A673 (cell line): ENCODE measurements at regions of chr15 and their contacts with region 1.

Region 1: DNA sequence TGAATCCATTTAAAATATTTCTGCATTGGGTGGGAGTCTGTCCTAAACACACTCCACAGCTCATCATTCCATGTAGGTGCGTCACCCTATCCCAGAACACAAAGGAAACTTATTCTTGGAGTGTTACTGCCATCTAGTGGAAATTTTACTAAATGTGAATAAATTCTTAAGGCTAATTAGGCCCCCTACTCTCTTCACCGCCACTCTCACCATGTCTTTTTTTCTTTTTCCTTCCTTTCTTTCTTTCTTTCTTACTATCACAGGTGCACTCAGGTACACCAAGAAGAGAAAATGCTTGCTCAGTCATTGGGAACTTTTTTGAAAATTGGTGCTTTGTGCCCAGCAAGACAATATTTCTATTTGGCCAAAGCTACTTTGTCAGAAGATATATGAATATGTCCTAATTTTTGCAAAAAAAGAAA is 26.4 kb upstream of the ATP8B4 start:
- DNase-seq: peak; percentile 86
- H3K4me3 ChIP-seq: no peak overlapping the region
- H3K27ac ChIP-seq: no peak overlapping the region
- H3K4me1 ChIP-seq: peaks cover 6% of the 10 kb centered on the region
- H3K27me3 ChIP-seq: no peaks in the 10 kb centered on the region
- CTCF ChIP-seq: peak; percentile 60

Region 2: DNA sequence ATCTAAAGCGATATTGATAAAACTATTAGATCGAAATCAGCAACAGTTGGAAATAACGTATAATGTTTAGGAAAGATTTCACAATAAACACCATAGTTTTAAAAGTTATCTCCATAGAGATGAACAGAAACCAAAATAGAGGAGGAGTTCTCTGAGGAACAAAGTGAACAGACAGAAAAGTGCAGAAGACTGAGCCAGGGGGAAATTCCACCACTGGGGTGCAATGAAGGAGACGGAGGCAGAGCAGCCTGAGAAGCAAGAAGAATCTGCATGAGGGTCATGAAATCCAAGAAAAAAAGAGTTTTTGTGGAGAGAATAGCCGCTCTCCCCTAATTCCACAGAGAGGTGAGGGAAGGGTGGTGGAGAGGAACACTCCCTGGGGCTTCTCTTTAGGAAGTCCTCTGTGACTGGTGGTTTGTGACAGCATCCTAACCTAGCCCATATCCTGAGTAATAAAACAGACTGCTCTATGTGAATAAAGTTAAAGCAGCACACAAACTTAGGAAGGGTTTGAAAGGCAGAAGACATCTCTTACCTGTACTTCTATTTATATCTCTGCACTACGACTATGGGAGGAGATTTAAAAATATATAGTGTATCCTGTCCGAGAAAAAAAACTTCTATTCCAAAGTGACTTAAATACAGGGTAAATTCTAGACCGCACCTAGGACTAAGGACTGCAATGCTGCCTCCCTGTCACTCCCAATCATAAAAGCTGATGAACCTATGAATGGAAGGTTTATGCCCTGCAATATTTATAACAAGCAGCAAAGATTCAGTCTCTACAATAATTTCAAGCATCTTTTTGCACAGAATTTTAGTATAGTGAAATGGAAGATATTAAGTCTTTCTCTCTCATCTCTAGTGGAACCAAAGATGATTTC is 49.3 kb before region 1 on chr15:
- CTCF ChIA-PET with region 1: no interaction called
- POLR2A ChIA-PET with region 1: no interaction called
- intact Hi-C with region 1: no loop called
- DNase-seq: no peak
- H3K4me3 ChIP-seq: no peak overlapping the region
- H3K27ac ChIP-seq: no peak overlapping the region
- H3K4me1 ChIP-seq: no peaks in the 10 kb centered on the region
- H3K27me3 ChIP-seq: no peaks in the 10 kb centered on the region
- CTCF ChIP-seq: no peak

Region 3: GRCh38 chr15:50176869-50177268 is 31.4 kb after region 1 on chr15:
- CTCF ChIA-PET with region 1: no interaction called
- POLR2A ChIA-PET with region 1: no interaction called
- intact Hi-C with region 1: no loop called
- DNase-seq: no peak
- H3K4me3 ChIP-seq: no peak overlapping the region
- H3K27ac ChIP-seq: no peak overlapping the region
- H3K4me1 ChIP-seq: no peaks in the 10 kb centered on the region
- H3K27me3 ChIP-seq: peaks cover 2% of the 10 kb centered on the region
- CTCF ChIP-seq: no peak

Region 4: DNA sequence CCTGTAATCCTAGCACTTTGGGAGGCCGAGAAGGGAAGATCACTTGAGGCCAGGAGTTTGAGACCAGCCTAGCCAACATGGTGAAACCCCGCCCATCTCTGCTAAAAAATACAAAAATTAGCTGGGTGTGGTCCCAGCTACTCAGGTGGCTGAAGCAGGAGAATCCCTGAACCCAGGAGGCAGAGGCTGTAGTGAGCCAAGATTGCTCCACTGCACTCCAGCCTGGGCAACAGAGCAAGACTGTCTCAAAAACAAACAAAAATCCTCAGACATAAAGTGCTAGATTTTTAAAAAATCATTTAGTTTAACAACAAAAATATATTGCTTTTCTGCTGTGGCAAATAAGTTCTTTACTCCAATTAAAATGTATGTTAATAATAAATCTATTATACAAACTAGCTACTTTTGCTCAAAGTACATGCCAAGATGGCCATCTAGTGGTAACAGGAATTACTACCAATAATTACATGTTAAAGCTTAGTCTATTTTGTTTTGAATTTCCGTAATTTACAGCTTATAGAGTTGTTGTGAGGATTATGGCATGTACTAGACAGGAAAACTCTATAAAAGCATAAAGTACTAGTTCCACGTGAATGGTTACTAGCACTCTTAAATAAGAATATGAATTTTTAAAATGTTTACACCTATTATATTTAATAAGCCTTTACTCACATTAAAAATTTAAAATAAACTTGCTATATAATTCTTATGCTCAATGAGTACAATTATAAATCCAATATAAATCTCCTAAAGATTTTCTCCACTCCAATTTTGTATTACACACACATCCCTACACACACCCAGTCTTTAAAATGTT is 170.6 kb after region 1 on chr15:
- CTCF ChIA-PET with region 1: interaction called, 16 read pairs
- POLR2A ChIA-PET with region 1: no interaction called
- intact Hi-C with region 1: loop called (anchors 2 kb)
- DNase-seq: peak; percentile 56
- H3K4me3 ChIP-seq: no peak overlapping the region
- H3K27ac ChIP-seq: no peak overlapping the region
- H3K4me1 ChIP-seq: peaks cover 10% of the 10 kb centered on the region
- H3K27me3 ChIP-seq: no peaks in the 10 kb centered on the region
- CTCF ChIP-seq: peak; percentile 78

Region 5: DNA sequence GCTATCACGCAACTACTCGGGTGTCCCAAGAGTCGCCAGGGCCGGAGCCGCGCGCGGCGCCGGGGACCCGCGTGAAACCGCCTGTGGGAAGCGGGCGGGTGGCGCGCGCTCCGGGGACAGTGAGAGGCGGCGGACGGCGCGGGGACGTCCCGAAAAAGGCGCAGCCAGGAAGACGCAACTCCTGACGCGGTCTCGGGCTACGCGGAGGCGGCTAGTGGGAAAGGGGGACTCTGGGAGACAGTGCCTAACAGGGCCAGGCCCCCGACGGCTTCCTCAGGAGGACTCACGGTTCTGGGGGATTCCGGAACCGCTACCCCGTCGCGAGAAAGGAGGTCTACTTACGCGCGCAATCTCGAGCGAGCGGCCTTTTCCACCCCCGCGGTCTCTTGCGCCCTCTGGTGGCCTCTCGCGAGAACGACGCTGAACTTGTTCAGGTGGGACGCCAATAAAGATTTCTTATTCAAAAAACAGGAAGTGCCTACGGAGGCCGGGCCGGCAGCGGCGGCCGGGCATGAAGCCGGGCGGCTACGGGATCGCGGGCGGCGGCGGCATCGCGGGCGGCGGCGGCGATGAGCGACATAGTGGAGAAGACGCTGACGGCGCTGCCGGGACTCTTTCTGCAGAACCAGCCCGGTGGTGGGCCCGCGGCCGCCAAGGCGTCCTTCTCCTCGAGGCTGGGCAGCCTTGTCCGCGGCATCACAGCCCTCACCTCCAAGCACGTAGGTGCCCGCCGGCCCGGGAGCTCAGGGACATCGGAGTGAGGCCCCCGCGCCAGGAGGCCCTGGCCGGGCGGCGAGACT is 762.9 kb after region 1 on chr15 and contains the start of gene AP4E1:
- CTCF ChIA-PET with region 1: no interaction called
- POLR2A ChIA-PET with region 1: no interaction called
- intact Hi-C with region 1: loop called (anchors 5 kb)
- DNase-seq: peak; percentile 96
- H3K4me3 ChIP-seq: peak within 1 kb of the TSS; percentile 92
- H3K27ac ChIP-seq: peak within 1 kb of the TSS; percentile 96
- H3K4me1 ChIP-seq: peaks cover 11% of the 10 kb centered on the region
- H3K27me3 ChIP-seq: no peaks in the 10 kb centered on the region
- CTCF ChIP-seq: peak; percentile 87
- total RNA-seq, gene AP4E1: 13.7 and 13.9 TPM in 2 replicates